Naive thymus-derived CD4-positive, alpha-beta T cell (primary cell): ENCODE measurements at regions of chr6 and their contacts with region 1.

Region 1: GRCh38 chr6:166627033-166627874 is at the start of gene RPS6KA2:
- DNase-seq: peak; percentile 99 to 100 (median 100)
- ATAC-seq: peak; percentile 95
- H3K4me3 ChIP-seq: peak within 1 kb of the TSS; percentile 91
- H3K4me3 Mint-ChIP-seq: peak within 1 kb of the TSS; percentile 83 to 98 (median 91)
- H3K27ac ChIP-seq: peak within 1 kb of the TSS; percentile 66
- H3K27ac Mint-ChIP-seq: peak within 1 kb of the TSS; percentile 60 to 96 (median 90)
- H3K4me1 ChIP-seq: peaks cover 6 to 16% of the 10 kb centered on the region in 2 donors
- H3K4me1 Mint-ChIP-seq: peaks cover 8 to 30% (median 14%) of the 10 kb centered on the region in 7 donors
- H3K27me3 ChIP-seq: no peaks in the 10 kb centered on the region
- H3K27me3 Mint-ChIP-seq: peaks cover 0 to 60% (median 18%) of the 10 kb centered on the region in 5 donors
- total RNA-seq, gene RPS6KA2: 4.5 to 17.1 (median 6.6) TPM

Region 2: GRCh38 chr6:166258854-166259276 is 368.4 kb before region 1 on chr6:
- CTCF ChIA-PET with region 1: no interaction called
- POLR2A ChIA-PET with region 1: no interaction called
- intact Hi-C with region 1: loop called in 1 of 2 experiments (anchors 5 kb)
- DNase-seq: peak in 2 of 9 donors; percentile 20 to 21
- ATAC-seq: peak; percentile 84
- H3K4me3 ChIP-seq: no peak overlapping the region
- H3K4me3 Mint-ChIP-seq: peak overlapping the region in 9 of 10 donors; percentile 36 to 78 (median 75)
- H3K27ac ChIP-seq: no peak overlapping the region
- H3K27ac Mint-ChIP-seq: peak overlapping the region in 8 of 9 donors; percentile 75 to 99 (median 92)
- H3K4me1 ChIP-seq: peaks cover 8 to 22% of the 10 kb centered on the region in 2 donors
- H3K4me1 Mint-ChIP-seq: peaks cover 0 to 66% (median 42%) of the 10 kb centered on the region in 7 donors
- H3K27me3 ChIP-seq: no peaks in the 10 kb centered on the region
- H3K27me3 Mint-ChIP-seq: peaks cover 0 to 54% (median 34%) of the 10 kb centered on the region in 5 donors

Region 3: GRCh38 chr6:166419286-166419685 is 208.0 kb before region 1 on chr6:
- CTCF ChIA-PET with region 1: no interaction called
- POLR2A ChIA-PET with region 1: interaction called, 5 read pairs
- intact Hi-C with region 1: loop called (anchors 1 kb)
- DNase-seq: peak in 2 of 9 donors; percentile 34 to 52
- ATAC-seq: peak; percentile 42
- H3K4me3 ChIP-seq: no peak overlapping the region
- H3K4me3 Mint-ChIP-seq: peak overlapping the region; percentile 4 to 79 (median 57)
- H3K27ac ChIP-seq: peak overlapping the region; percentile 50
- H3K27ac Mint-ChIP-seq: peak overlapping the region; percentile 83 to 99 (median 97)
- H3K4me1 ChIP-seq: peaks cover 63 to 66% of the 10 kb centered on the region in 2 donors
- H3K4me1 Mint-ChIP-seq: peaks cover 52 to 73% (median 64%) of the 10 kb centered on the region in 7 donors
- H3K27me3 ChIP-seq: no peaks in the 10 kb centered on the region
- H3K27me3 Mint-ChIP-seq: peaks cover 0 to 1% (median 0%) of the 10 kb centered on the region in 5 donors

Region 4: DNA sequence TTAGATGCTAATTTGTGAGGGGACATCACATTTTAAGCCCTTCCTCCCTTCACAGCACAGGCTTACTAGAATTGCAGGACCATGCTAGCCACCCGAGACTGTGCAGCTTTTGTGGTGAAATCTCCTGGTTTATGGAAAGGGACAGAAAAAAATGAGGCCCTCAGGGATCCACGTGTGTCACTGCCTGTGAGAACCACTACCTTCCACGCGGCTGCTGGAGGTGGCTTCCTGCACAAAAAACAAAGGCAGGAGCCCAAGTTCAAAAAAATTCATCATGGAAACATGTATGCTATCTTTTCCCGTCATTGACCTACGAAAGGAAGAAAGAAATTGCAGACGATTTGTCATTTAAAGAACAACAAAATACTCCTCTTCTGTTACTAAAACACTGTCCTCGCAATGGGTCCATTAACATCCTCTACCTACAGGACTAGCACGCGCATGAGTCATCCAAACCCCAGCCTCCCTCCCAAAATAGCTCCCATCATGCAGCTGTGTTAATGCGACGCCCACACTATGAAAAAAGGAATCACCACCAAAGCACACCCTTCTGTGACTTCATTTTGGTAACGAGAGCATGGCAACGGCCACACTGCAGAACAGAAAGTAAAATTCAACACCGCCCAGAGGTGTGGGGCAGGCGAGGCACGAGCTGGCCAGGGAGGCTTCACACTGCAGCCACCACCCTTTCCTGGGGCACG is 86.5 kb before region 1 on chr6:
- CTCF ChIA-PET with region 1: no interaction called
- POLR2A ChIA-PET with region 1: no interaction called
- intact Hi-C with region 1: loop called (anchors 1 kb)
- DNase-seq: peak in 7 of 9 donors; percentile 3 to 48 (median 25)
- ATAC-seq: peak; percentile 87
- H3K4me3 ChIP-seq: peak overlapping the region; percentile 22
- H3K4me3 Mint-ChIP-seq: peak overlapping the region in 9 of 10 donors; percentile 22 to 78 (median 76)
- H3K27ac ChIP-seq: peak overlapping the region; percentile 50
- H3K27ac Mint-ChIP-seq: peak overlapping the region in 8 of 9 donors; percentile 12 to 89 (median 84)
- H3K4me1 ChIP-seq: peaks cover 13 to 14% of the 10 kb centered on the region in 2 donors
- H3K4me1 Mint-ChIP-seq: peaks cover 16 to 38% (median 28%) of the 10 kb centered on the region in 7 donors
- H3K27me3 ChIP-seq: no peaks in the 10 kb centered on the region
- H3K27me3 Mint-ChIP-seq: no peaks in the 10 kb centered on the region

Region 5: GRCh38 chr6:166760288-166760687 is 133.0 kb after region 1 on chr6:
- CTCF ChIA-PET with region 1: no interaction called
- POLR2A ChIA-PET with region 1: no interaction called
- intact Hi-C with region 1: loop called in 1 of 2 experiments (anchors 5 kb)
- DNase-seq: peak; percentile 23 to 77 (median 62)
- ATAC-seq: peak; percentile 92
- H3K4me3 ChIP-seq: no peak overlapping the region
- H3K4me3 Mint-ChIP-seq: peak overlapping the region; percentile 32 to 82 (median 73)
- H3K27ac ChIP-seq: no peak overlapping the region
- H3K27ac Mint-ChIP-seq: peak overlapping the region in 6 of 9 donors; percentile 61 to 88 (median 72)
- H3K4me1 ChIP-seq: peaks cover 0 to 16% of the 10 kb centered on the region in 2 donors
- H3K4me1 Mint-ChIP-seq: peaks cover 23 to 54% (median 39%) of the 10 kb centered on the region in 7 donors
- H3K27me3 ChIP-seq: no peaks in the 10 kb centered on the region
- H3K27me3 Mint-ChIP-seq: peaks cover 10 to 45% (median 17%) of the 10 kb centered on the region in 5 donors

Region 6: GRCh38 chr6:166956444-166957086 is 329.3 kb after region 1 on chr6 and contains the start of gene RNASET2:
- CTCF ChIA-PET with region 1: no interaction called
- POLR2A ChIA-PET with region 1: interaction called, 6 read pairs
- intact Hi-C with region 1: loop called (anchors 1 kb)
- DNase-seq: peak; percentile 95 to 100 (median 99)
- ATAC-seq: peak; percentile 93
- H3K4me3 ChIP-seq: peak within 1 kb of the TSS; percentile 86
- H3K4me3 Mint-ChIP-seq: peak within 1 kb of the TSS; percentile 87 to 99 (median 96)
- H3K27ac ChIP-seq: peak within 1 kb of the TSS; percentile 92
- H3K27ac Mint-ChIP-seq: peak within 1 kb of the TSS; percentile 95 to 99 (median 99)
- H3K4me1 ChIP-seq: peaks cover 41 to 66% of the 10 kb centered on the region in 2 donors
- H3K4me1 Mint-ChIP-seq: peaks cover 56 to 79% (median 73%) of the 10 kb centered on the region in 7 donors
- H3K27me3 ChIP-seq: no peaks in the 10 kb centered on the region
- H3K27me3 Mint-ChIP-seq: no peaks in the 10 kb centered on the region
- total RNA-seq, gene RNASET2: 147 to 332 (median 264) TPM

Region 7: GRCh38 chr6:167826230-167826895 is 1199.1 kb after region 1 on chr6:
- CTCF ChIA-PET with region 1: no interaction called
- POLR2A ChIA-PET with region 1: no interaction called
- intact Hi-C with region 1: loop called in 1 of 2 experiments (anchors 10 kb)
- DNase-seq: peak; percentile 11 to 73 (median 55)
- ATAC-seq: peak; percentile 97
- H3K4me3 ChIP-seq: peak overlapping the region; percentile 66
- H3K4me3 Mint-ChIP-seq: peak overlapping the region; percentile 83 to 91 (median 85)
- H3K27ac ChIP-seq: no peak overlapping the region
- H3K27ac Mint-ChIP-seq: peak overlapping the region in 4 of 9 donors; percentile 44 to 69 (median 60)
- H3K4me1 ChIP-seq: peaks cover 0 to 14% of the 10 kb centered on the region in 2 donors
- H3K4me1 Mint-ChIP-seq: peaks cover 5 to 43% (median 26%) of the 10 kb centered on the region in 7 donors
- H3K27me3 ChIP-seq: peaks cover 0 to 27% of the 10 kb centered on the region in 2 donors
- H3K27me3 Mint-ChIP-seq: peaks cover 49 to 81% (median 69%) of the 10 kb centered on the region in 5 donors